ENCODE measurements at regions of chr15 and their contacts with region 1.

Region 1: DNA sequence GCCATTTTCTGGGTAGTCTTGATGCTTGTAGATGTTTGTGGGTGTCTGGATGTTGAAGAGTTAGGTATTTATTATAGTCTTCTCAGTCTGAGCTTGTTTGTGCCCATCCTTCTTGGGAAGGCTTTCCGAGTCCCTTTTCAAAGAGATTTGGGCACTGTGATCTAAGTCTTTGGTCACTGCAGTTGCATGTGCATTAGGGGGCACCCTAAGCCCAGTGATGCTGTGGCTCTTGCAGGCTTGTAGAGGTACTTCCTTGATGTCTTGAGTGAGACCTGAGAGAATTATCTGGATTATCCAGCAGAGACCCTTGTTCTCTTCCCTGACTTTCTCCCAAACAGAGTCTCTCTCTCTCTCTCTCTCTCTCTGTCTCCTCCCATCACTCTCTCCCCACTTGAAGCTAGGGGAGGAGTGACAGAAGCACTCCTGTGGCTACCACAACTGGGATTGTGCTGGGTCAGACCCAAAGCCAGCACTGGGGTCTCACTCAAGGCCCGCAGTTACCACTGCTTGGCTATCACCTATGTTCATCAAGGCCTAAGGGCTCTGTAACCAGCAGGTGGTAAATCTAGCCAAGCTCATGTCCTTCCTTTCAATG is 68.5 kb downstream of the TMCO5A start:
- DNase-seq: peak; percentile 65 to 76
- H3K4me3 ChIP-seq: no peak overlapping the region
- H3K27ac ChIP-seq: no peak overlapping the region
- H3K4me1 ChIP-seq: no peaks in the 10 kb centered on the region
- H3K27me3 ChIP-seq: no peaks in the 10 kb centered on the region
- CTCF ChIP-seq: peak in 5 of 6 experiments; percentile 52 to 88 (median 70)
- POLR2A ChIP-seq: no peak

Region 2: DNA sequence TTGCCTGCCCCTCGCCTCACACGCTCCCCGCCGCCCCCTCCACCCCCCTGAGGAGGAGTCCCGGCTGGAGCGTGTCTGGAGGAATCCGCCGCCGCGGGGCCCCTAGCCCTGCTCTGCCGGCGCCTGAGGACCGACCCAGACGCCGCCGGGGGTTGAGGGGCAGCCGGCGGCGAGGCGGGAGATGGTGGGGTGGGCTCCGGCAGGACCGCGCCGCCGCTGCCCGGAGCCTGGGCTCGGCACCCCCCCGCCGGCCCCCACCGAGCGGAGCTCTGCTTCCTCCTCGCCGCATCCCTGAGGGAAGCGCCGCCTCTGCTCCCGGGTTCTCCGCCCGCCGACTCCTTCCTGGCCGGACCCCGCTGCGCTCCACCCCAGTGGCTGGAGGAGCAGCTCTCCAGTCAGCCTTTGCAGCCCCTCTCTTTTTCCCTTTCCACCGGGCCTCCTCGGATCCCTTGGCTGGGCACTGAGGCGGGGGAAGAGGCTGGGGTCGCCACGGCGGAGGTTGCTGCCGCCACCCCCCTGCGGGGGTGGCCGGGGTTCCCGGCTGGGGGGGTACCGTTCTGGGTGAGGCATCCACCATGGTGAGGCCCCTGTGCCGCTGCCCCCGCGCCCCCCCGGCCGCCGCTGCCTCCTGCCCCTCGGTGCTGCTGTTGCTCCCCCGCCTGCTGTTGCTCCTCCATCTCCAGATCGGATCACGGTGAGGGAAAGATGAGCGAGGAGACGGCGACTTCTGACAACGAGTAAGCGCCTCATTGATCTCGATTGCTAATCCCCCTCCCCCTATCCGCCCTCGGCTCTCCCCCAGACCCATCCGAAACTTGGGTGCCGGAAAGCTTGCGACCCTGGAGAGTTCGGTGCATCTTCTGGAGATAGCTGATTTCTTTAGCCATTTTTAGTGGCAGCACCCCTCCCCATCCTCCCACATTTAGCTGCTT is 249.8 kb after region 1 on chr15 and contains the start of gene SPRED1:
- intact Hi-C with region 1: loop called (anchors 10 kb)
- DNase-seq: peak; percentile 70 to 71
- H3K4me3 ChIP-seq: peak within 1 kb of the TSS; percentile 86 to 96 (median 94)
- H3K27ac ChIP-seq: peak within 1 kb of the TSS; percentile 98 to 100 (median 99)
- H3K4me1 ChIP-seq: peaks cover 14 to 15% of the 10 kb centered on the region in 2 donors
- H3K27me3 ChIP-seq: no peaks in the 10 kb centered on the region
- CTCF ChIP-seq: no peak
- POLR2A ChIP-seq: no peak
- total RNA-seq, gene SPRED1: 77.9 to 92.7 (median 82.6) TPM